CD8-positive, alpha-beta T cell (primary cell): ENCODE measurements at regions of chr3 and their contacts with region 1.

Region 1: DNA sequence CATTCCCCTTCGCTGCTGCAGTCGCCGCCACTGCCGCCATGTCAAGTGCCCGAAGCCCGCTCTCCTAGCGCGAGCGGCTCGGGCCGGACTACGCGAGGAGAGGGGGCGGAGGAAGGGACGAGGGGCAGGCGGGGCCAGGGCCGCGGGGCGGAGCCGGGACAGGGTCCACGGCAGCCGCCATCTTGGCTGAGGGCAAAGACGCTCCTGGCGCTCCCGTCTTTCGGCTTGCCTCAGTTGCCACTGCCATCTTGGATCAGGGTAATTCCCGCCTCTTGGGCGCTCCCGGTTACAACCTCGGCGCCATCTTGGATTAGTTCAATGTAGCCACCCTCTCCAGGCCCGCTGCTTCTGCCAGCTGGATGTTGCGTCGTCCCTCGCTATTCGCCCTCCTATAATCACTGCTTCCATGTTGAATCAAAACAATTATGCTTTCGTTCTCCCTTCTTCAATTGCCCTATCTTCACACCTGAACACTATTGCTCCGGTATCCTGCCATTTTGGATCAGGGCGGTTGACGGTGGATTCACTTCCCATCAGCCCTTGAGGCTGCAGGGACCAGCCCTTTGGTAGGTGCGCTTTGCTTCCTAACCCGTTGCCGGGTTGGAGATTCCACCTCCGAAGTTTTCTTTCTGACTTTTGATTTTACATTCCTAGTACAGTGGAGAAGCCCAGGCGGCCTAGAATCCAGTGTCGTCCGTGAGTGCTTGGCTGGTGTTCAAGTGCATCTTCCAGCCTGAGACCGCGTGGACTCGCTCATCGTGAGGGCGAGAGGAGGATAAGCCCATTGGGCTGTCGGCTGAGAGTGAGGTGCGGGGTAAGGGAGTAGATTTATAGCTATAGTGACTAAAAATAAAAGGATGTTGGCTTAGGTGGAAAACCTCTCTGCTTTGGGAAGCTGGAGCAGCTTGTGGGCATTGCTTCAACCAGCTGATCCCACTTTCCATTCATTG is at the start of gene HACD2:
- DNase-seq: peak; percentile 88 to 97 (median 95)
- ATAC-seq: peak; percentile 91
- H3K4me3 ChIP-seq: peak within 1 kb of the TSS; percentile 74 to 87
- H3K4me3 Mint-ChIP-seq: no peak within 1 kb of the TSS
- H3K27ac ChIP-seq: peak within 1 kb of the TSS; percentile 62 to 92
- H3K27ac Mint-ChIP-seq: peak within 1 kb of the TSS; percentile 90
- H3K4me1 ChIP-seq: peaks cover 20% of the 10 kb centered on the region
- H3K4me1 Mint-ChIP-seq: peaks cover 20% of the 10 kb centered on the region
- H3K27me3 ChIP-seq: no peaks in the 10 kb centered on the region
- H3K27me3 Mint-ChIP-seq: no peaks in the 10 kb centered on the region
- CTCF ChIP-seq: no peak
- total RNA-seq, gene HACD2: 12.9 to 13.4 TPM

Region 2: DNA sequence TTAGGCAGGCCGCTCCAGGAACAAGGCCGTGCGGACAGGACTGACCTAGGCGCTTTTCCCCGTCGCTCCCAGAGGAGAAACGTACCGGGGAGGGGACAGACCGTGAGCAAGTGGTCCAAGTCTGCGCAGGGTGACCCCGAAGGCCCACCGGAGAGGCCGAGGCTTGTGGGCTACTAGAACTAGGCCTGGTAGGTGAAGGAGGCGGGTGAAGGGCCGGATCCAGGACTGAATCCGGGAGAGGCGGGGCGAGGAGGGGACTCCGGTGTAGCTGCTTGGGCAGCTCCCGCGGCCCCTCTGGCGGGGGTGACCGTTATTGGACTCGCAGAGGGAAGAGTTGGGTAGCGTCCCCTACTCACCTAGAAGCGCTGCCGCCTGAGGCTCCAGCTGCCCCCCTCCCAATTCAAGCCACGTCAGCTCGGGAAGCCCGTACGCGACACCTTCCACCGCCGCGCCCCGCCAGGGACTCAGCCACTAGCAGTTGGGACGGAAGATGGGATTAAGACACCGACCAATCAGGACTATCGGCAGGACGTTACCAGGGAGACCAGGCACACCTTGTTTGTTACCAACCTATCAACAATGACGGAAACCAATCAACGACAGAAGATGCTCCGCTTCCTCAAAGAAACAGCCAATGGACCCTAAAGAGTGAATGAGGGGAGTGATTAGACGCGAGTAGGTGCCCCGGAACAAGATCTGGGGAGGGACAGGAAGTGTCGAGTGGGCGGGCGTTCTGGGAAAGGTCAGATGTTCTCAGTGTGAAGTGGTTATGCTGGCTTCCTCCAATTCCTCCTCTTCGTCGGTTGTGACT is 1835.8 kb before region 1 on chr3 and contains the start of gene GOLGB1:
- CTCF ChIA-PET with region 1: no interaction called
- POLR2A ChIA-PET with region 1: no interaction called
- intact Hi-C with region 1: loop called in 1 of 2 experiments (anchors 5 kb)
- DNase-seq: peak; percentile 74 to 99 (median 90)
- ATAC-seq: peak; percentile 94
- H3K4me3 ChIP-seq: peak within 1 kb of the TSS; percentile 86 to 94
- H3K4me3 Mint-ChIP-seq: no peak within 1 kb of the TSS
- H3K27ac ChIP-seq: peak within 1 kb of the TSS; percentile 97 to 98
- H3K27ac Mint-ChIP-seq: no peak within 1 kb of the TSS
- H3K4me1 ChIP-seq: peaks cover 19% of the 10 kb centered on the region
- H3K4me1 Mint-ChIP-seq: peaks cover 14% of the 10 kb centered on the region
- H3K27me3 ChIP-seq: peaks cover 0 to 6% of the 10 kb centered on the region in 2 experiments
- H3K27me3 Mint-ChIP-seq: peaks cover 4% of the 10 kb centered on the region
- CTCF ChIP-seq: no peak
- total RNA-seq, gene GOLGB1: 47.4 to 53.9 TPM

Region 3: GRCh38 chr3:122564155-122564912 is 1020.9 kb before region 1 on chr3 and contains the starts of genes DTX3L and PARP9:
- CTCF ChIA-PET with region 1: no interaction called
- POLR2A ChIA-PET with region 1: no interaction called
- intact Hi-C with region 1: loop called in 1 of 2 experiments (anchors 10 kb)
- DNase-seq: peak; percentile 39 to 91 (median 80)
- ATAC-seq: peak; percentile 93
- H3K4me3 ChIP-seq: peak within 1 kb of the TSS; percentile 81 to 85
- H3K4me3 Mint-ChIP-seq: peak within 1 kb of the TSS; percentile 92
- H3K27ac ChIP-seq: peak within 1 kb of the TSS; percentile 83 to 88
- H3K27ac Mint-ChIP-seq: peak within 1 kb of the TSS; percentile 96
- H3K4me1 ChIP-seq: peaks cover 39% of the 10 kb centered on the region
- H3K4me1 Mint-ChIP-seq: peaks cover 75% of the 10 kb centered on the region
- H3K27me3 ChIP-seq: no peaks in the 10 kb centered on the region
- H3K27me3 Mint-ChIP-seq: no peaks in the 10 kb centered on the region
- CTCF ChIP-seq: no peak
- total RNA-seq, gene DTX3L: 14.1 to 14.3 TPM
- total RNA-seq, gene PARP9: 12.0 to 12.1 TPM

Region 4: DNA sequence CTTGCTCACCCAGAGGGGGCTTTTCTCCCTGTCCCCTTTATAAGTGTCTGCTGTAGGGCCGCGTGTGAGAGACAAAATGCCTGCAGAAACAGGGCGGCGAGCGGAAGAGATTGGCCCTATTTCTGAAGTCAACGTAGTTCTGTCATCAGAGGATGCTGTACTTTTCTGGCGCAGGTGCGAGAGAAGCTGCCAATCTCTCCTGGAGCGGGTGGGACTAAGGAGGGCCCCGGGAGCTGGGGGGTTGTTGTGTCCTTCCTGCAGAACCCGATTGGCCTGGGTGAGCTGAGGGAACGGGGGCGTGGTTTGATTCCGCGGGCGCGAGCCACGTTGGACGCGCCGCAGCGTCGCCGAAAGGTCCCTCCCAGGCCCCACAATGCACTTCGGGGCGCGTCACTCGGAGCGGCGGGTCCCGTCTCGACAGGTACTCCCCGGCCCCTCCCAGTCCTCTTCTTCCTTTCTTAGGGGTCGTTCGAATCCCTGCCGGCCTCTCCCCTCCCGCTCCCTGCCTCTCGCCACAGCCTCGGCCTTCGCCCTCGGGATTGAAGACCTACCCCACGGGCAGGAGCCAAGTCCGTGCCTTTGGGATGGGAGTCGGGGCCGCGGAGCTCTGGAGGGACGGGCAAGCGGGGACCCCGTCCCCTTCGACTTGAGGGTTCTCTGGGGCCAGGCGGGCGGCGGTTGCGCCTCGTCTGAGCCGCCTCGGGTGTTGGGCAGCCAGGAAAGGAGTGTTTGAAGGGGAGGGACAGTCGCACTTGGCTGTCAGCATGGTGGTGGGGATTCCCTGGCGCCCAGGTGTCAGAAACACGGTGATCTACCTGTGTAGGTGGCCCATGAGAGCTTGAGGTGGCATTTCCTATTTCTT is 383.5 kb before region 1 on chr3 and contains the start of gene SEC22A:
- CTCF ChIA-PET with region 1: no interaction called
- POLR2A ChIA-PET with region 1: interaction called, 3 read pairs
- intact Hi-C with region 1: loop called (anchors 1 kb)
- DNase-seq: peak; percentile 91 to 99 (median 96)
- ATAC-seq: peak; percentile 96
- H3K4me3 ChIP-seq: peak within 1 kb of the TSS; percentile 82 to 96
- H3K4me3 Mint-ChIP-seq: peak within 1 kb of the TSS; percentile 83
- H3K27ac ChIP-seq: peak within 1 kb of the TSS; percentile 94 to 95
- H3K27ac Mint-ChIP-seq: peak within 1 kb of the TSS; percentile 98
- H3K4me1 ChIP-seq: peaks cover 18% of the 10 kb centered on the region
- H3K4me1 Mint-ChIP-seq: peaks cover 26% of the 10 kb centered on the region
- H3K27me3 ChIP-seq: no peaks in the 10 kb centered on the region
- H3K27me3 Mint-ChIP-seq: no peaks in the 10 kb centered on the region
- CTCF ChIP-seq: no peak
- total RNA-seq, gene SEC22A: 8.6 to 9.1 TPM

Region 5: DNA sequence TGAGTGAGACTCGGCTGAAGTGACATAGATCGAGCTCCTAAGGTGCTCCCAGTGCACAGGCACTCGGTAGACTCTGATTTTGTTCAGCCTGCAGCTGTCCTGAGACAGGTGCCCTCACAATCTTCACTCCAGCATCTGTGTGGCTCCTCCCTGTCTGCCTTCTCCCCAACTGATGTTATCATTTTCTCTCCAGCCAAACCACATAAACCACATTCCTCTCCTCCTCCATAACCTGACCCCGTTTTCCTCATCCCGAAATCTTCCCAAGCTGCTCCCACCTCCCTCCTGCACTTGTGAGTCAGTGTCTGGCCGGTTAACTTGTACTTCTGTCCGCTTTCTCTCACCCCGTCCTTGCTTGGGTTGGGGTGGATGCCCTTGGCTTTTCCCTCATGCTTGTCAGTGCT is 92.8 kb after region 1 on chr3:
- CTCF ChIA-PET with region 1: no interaction called
- POLR2A ChIA-PET with region 1: no interaction called
- intact Hi-C with region 1: no loop called
- DNase-seq: no peak
- ATAC-seq: no peak
- H3K4me3 ChIP-seq: no peak overlapping the region
- H3K4me3 Mint-ChIP-seq: no peak overlapping the region
- H3K27ac ChIP-seq: no peak overlapping the region
- H3K27ac Mint-ChIP-seq: no peak overlapping the region
- H3K4me1 ChIP-seq: no peaks in the 10 kb centered on the region
- H3K4me1 Mint-ChIP-seq: no peaks in the 10 kb centered on the region
- H3K27me3 ChIP-seq: no peaks in the 10 kb centered on the region
- H3K27me3 Mint-ChIP-seq: peaks cover 9% of the 10 kb centered on the region
- CTCF ChIP-seq: no peak

Region 6: DNA sequence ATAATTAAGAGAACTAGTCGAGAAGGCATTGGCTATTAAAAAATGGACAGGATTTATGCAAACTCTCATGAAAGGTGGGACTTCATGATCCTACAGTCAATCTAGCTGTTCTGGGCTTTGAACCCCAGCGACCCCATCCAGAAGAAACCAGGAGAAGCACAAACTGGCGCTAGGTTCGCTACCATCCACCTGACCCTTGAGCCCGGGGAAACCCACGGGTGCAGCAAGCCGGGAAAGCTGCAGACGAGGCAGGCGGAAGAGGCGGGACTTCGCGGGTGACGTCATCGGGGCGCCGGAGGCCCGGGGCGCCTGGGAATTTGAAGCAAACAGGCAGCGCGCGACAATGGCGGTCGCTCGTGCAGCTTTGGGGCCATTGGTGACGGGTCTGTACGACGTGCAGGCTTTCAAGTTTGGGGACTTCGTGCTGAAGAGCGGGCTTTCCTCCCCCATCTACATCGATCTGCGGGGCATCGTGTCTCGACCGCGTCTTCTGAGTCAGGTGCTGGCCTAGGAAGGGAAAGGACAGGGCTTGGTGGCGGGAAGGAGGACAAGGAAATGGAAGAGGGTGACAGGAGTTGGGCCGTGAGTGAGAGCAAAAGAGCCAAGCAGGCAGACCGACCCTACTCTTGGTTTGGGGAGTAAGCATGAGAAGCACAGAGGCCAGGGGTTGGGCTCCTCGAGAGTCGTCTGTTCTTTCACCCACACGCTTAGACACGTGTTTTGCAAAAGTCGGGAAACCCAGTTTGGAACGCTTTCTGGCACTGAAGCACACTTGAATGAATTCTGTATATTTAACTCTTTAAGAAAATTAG is 1145.1 kb after region 1 on chr3 and contains the start of gene UMPS:
- CTCF ChIA-PET with region 1: no interaction called
- POLR2A ChIA-PET with region 1: no interaction called
- intact Hi-C with region 1: loop called in 1 of 2 experiments (anchors 5 kb)
- DNase-seq: peak; percentile 82 to 95 (median 93)
- ATAC-seq: peak; percentile 91
- H3K4me3 ChIP-seq: peak within 1 kb of the TSS; percentile 96 to 97
- H3K4me3 Mint-ChIP-seq: peak within 1 kb of the TSS; percentile 99
- H3K27ac ChIP-seq: peak within 1 kb of the TSS; percentile 82 to 93
- H3K27ac Mint-ChIP-seq: peak within 1 kb of the TSS; percentile 99
- H3K4me1 ChIP-seq: peaks cover 29% of the 10 kb centered on the region
- H3K4me1 Mint-ChIP-seq: peaks cover 39% of the 10 kb centered on the region
- H3K27me3 ChIP-seq: peaks cover 0 to 4% of the 10 kb centered on the region in 2 experiments
- H3K27me3 Mint-ChIP-seq: peaks cover 10% of the 10 kb centered on the region
- CTCF ChIP-seq: no peak
- total RNA-seq, gene UMPS: 16.7 to 19.8 TPM

Region 7: DNA sequence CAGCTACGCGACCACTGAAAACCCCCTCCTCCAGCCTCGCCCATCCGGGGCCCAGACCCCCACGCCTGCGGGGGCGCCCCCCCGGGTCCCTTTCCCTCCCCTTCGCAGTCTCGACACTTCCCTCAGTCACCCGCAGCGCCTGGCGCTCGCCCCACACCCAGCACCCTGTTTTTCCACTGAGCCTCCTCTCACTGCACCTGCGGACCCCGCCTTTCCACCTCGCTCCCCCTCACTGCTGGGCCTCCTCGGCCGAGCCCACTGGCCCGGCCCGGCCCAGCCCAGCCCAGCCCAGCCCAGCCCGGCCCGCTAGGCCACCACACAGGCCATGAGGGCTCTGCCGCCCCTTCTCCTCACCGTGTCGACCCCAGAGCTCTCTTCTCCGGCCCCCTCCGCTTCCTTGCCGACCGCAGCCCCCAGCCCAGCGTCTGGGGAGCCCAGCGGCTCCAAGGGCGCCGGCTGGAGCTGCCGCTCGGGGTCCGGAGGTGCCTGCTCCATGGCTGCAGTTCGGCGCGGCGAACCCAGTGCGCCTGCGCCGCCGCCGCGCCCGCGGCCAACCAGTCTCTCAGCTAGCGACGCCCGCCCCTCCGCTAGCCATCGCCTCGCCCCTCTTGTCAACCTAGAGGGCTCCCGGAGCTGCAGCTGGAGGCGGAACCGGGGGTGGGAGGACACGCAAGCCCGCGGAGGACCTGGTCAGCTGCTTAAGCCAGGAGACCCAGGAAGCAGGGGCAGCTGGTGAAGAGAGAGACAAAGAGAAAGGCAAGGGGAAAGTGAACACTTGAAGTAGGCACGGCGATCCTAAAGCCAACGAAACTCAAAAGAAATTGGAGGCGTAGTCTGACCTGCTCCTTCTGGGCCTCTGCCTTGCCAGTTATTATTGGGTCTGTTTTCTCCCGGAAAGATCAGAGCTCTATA is 1934.7 kb after region 1 on chr3 and contains the start of gene SNX4:
- CTCF ChIA-PET with region 1: no interaction called
- POLR2A ChIA-PET with region 1: no interaction called
- intact Hi-C with region 1: loop called in 1 of 2 experiments (anchors 10 kb)
- DNase-seq: peak; percentile 73 to 91 (median 86)
- ATAC-seq: peak; percentile 96
- H3K4me3 ChIP-seq: peak within 1 kb of the TSS; percentile 66 to 77
- H3K4me3 Mint-ChIP-seq: peak within 1 kb of the TSS; percentile 97
- H3K27ac ChIP-seq: peak within 1 kb of the TSS; percentile 60 to 61
- H3K27ac Mint-ChIP-seq: peak within 1 kb of the TSS; percentile 95
- H3K4me1 ChIP-seq: peaks cover 12% of the 10 kb centered on the region
- H3K4me1 Mint-ChIP-seq: peaks cover 46% of the 10 kb centered on the region
- H3K27me3 ChIP-seq: no peaks in the 10 kb centered on the region
- H3K27me3 Mint-ChIP-seq: no peaks in the 10 kb centered on the region
- CTCF ChIP-seq: no peak
- total RNA-seq, gene SNX4: 26.4 to 29.7 TPM